Kidney (tissue), 22 donors: ENCODE measurements at regions of chr5 and their contacts with region 1.

Region 1: GRCh38 chr5:81751009-81751835 is at the start of gene SSBP2:
- DNase-seq: peak; percentile 99 to 100 (median 100)
- H3K4me3 ChIP-seq: peak within 1 kb of the TSS; percentile 73 to 90 (median 84)
- H3K27ac ChIP-seq: peak within 1 kb of the TSS; percentile 90 to 92
- H3K4me1 ChIP-seq: peaks cover 0 to 13% (median 2%) of the 10 kb centered on the region in 3 donors
- H3K27me3 ChIP-seq: no peaks in the 10 kb centered on the region
- CTCF ChIP-seq: no peak
- total RNA-seq, gene SSBP2: 57.1 TPM

Region 2: DNA sequence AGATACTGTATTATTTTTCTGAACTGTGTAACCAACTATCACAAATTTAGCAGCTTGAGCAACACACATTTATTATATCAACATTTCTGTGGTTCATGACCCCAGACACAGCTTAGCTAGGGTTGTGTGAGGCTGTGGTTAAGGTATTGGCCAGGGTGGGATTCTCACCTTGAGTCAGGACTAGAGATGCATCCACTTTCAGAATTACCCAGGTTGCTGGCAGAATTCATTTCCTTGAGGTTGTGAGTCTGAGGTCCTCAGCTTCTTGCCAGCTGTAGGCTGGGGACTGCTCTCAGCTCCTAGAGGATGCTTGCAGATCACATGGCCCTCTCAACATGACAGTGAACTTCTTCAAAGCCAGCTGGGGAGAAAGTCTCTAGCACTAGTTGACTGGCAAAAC is 913.5 kb before region 1 on chr5:
- intact Hi-C with region 1: no loop called
- DNase-seq: no peak
- H3K4me3 ChIP-seq: no peak overlapping the region
- H3K27ac ChIP-seq: no peak overlapping the region
- H3K4me1 ChIP-seq: no peaks in the 10 kb centered on the region
- H3K27me3 ChIP-seq: no peaks in the 10 kb centered on the region
- CTCF ChIP-seq: no peak

Region 3: DNA sequence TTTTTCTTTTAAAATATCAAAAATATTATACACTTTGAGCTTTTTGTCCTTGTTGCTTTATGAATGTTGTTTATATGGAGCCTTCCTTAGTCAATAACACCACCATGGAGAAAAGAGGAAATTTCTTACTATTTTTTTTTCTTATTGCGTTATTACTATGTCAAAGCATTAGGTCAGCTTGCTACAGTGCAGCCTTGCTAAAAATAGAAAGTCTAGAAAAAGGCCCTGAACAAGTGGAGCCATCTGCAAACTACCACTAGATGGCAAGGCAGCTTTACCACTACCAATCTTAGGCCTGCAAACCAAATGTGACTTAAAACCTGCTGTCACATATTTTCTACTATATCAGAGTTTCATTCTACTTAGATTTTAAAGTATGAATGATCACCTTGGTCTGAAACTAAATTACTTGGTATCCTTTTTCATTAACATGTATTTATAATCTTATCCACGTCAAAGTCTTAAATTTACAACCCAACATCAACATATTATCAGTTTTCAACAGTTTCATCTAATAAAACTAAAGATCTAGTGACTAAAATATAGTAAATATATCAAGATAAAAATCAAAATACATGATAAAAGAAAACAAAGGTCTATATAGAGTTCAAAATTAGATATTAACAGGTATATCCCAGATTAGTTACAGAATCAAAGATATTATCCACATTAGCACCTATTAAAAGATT is 244.2 kb before region 1 on chr5:
- intact Hi-C with region 1: loop called (anchors 10 kb)
- DNase-seq: peak in 4 of 5 donors; percentile 58 to 93 (median 80)
- H3K4me3 ChIP-seq: no peak overlapping the region
- H3K27ac ChIP-seq: peak overlapping the region in 1 of 2 donors; percentile 42
- H3K4me1 ChIP-seq: no peaks in the 10 kb centered on the region
- H3K27me3 ChIP-seq: no peaks in the 10 kb centered on the region
- CTCF ChIP-seq: peak; percentile 89

Region 4: GRCh38 chr5:81800797-81801196 is 49.6 kb after region 1 on chr5:
- intact Hi-C with region 1: no loop called
- DNase-seq: no peak
- H3K4me3 ChIP-seq: no peak overlapping the region
- H3K27ac ChIP-seq: no peak overlapping the region
- H3K4me1 ChIP-seq: no peaks in the 10 kb centered on the region
- H3K27me3 ChIP-seq: no peaks in the 10 kb centered on the region
- CTCF ChIP-seq: no peak

Region 5: DNA sequence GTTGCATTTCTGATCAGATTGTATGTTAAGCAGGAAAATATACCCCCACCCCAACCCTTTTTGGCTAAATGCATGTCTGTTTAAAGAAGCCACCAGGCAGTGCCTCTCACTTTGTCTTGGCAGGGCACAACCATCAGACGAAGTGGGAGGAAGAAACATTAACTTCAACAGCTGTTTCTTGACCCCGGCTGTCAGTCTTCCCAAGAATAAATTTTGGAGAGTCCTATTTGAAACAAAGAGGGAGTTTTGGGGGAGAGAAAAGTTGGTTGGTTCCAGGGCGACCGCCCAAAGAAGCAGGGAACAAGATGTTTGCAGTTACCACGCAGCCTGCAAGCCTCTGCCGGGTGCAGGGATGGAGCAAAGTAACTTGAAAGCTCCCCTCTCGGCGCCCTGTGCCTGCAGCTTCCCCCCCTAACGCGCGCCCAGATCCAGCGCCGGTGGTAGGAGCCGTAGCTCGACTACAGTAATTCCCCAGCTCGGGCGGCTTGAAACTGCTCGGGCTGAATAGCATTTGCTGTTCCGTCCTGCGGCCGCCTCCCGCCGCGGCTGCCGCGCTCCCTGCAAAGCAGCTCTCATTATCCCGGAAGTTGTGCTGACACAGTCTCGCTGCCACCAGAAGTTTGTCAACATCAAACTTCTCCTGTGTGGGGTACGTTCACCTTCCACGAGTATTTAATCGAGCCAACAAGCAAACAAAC is 100.4 kb after region 1 on chr5:
- intact Hi-C with region 1: loop called (anchors 5 kb)
- DNase-seq: peak; percentile 99
- H3K4me3 ChIP-seq: peak overlapping the region; percentile 74 to 77 (median 76)
- H3K27ac ChIP-seq: peak overlapping the region; percentile 87 to 91
- H3K4me1 ChIP-seq: peaks cover 0 to 24% (median 19%) of the 10 kb centered on the region in 3 donors
- H3K27me3 ChIP-seq: no peaks in the 10 kb centered on the region
- CTCF ChIP-seq: peak; percentile 17